ENCODE measurements at regions of chr1 and their contacts with region 1.

Region 1: GRCh38 chr1:209248649-209249279 is 334.8 kb upstream of the CAMK1G start:
- DNase-seq: peak; percentile 79
- H3K4me3 Mint-ChIP-seq: no peak overlapping the region
- H3K27ac Mint-ChIP-seq: no peak overlapping the region
- H3K4me1 Mint-ChIP-seq: no peaks in the 10 kb centered on the region
- H3K27me3 Mint-ChIP-seq: peaks cover 42% of the 10 kb centered on the region
- CTCF ChIP-seq: peak; percentile 95

Region 2: GRCh38 chr1:208834381-208835096 is 414.2 kb before region 1 on chr1:
- CTCF ChIA-PET with region 1: no interaction called
- intact Hi-C with region 1: loop called (anchors 5 kb)
- DNase-seq: no peak
- H3K4me3 Mint-ChIP-seq: no peak overlapping the region
- H3K27ac Mint-ChIP-seq: no peak overlapping the region
- H3K4me1 Mint-ChIP-seq: no peaks in the 10 kb centered on the region
- H3K27me3 Mint-ChIP-seq: no peaks in the 10 kb centered on the region
- CTCF ChIP-seq: no peak

Region 3: DNA sequence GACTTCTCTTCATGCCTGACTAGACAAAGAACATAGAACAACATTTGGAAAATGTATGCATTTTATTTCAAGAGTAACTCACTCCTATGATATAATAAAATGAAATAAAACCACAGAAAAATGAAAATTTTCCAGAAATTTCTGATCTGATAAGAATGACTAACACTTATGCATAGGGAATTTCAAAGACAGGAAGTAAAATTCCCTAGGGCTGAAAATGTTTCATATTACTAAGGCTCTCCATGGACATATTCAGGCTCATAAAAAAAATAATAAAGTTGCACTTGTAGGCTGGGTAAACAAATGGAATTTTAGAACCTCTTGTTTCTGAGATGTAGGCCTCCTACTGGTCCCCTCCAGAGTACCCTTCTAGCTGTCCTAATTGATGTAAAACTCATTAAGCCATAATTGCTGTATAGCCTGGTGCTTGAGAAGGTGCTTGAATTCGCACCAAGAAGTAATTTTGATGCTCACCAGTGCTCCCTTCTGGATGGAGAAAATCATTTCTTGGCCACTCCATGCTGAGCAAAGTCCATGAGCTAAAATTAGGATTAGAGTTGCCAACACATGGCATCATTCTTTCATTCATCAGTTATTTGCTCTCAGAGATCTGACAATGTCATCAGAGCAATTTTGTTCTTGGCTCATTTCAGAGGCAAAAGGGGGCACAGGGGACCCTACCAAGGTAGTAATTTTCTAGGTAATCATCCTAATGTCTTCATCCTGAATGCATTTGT is 306.2 kb before region 1 on chr1:
- CTCF ChIA-PET with region 1: no interaction called
- intact Hi-C with region 1: no loop called
- DNase-seq: no peak
- H3K4me3 Mint-ChIP-seq: no peak overlapping the region
- H3K27ac Mint-ChIP-seq: no peak overlapping the region
- H3K4me1 Mint-ChIP-seq: no peaks in the 10 kb centered on the region
- H3K27me3 Mint-ChIP-seq: no peaks in the 10 kb centered on the region
- CTCF ChIP-seq: no peak

Region 4: DNA sequence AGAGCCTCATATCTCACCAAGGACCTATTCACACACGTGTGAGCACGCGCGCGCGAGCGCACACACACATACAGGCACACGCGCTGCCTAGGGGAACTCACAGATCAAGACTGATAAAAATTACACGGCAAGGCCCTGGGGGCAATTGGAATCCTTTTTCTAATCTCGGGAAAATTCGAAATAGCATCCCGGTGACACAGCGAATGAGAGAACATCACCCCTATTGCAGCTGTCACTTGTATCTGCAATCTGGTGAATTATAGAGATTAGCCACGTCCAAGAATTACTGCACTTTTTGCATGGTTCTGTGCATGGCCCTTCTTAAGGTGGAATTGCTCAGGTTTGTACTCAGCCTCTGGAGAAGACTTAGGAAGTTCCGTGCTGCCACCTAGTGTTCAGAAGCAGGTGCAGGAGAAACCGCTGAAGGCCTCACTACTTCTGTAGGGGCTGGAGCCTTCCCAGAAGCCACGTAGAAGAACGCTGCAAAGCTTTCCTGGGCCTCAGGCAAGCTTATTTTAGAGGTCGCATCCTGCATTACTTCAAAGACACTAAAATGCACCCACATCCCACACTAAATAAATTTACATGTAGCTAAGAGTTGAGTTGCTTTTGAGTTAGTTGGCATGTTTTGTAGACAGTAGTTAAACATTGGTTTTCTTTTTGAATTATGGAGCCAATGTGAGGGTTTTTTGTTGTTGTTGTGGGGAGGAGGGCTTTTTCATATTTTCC is 105.5 kb after region 1 on chr1:
- CTCF ChIA-PET with region 1: interaction called, 3 read pairs
- intact Hi-C with region 1: loop called (anchors 1 kb)
- DNase-seq: peak; percentile 82
- H3K4me3 Mint-ChIP-seq: no peak overlapping the region
- H3K27ac Mint-ChIP-seq: no peak overlapping the region
- H3K4me1 Mint-ChIP-seq: peaks cover 7% of the 10 kb centered on the region
- H3K27me3 Mint-ChIP-seq: no peaks in the 10 kb centered on the region
- CTCF ChIP-seq: peak; percentile 84

Region 5: DNA sequence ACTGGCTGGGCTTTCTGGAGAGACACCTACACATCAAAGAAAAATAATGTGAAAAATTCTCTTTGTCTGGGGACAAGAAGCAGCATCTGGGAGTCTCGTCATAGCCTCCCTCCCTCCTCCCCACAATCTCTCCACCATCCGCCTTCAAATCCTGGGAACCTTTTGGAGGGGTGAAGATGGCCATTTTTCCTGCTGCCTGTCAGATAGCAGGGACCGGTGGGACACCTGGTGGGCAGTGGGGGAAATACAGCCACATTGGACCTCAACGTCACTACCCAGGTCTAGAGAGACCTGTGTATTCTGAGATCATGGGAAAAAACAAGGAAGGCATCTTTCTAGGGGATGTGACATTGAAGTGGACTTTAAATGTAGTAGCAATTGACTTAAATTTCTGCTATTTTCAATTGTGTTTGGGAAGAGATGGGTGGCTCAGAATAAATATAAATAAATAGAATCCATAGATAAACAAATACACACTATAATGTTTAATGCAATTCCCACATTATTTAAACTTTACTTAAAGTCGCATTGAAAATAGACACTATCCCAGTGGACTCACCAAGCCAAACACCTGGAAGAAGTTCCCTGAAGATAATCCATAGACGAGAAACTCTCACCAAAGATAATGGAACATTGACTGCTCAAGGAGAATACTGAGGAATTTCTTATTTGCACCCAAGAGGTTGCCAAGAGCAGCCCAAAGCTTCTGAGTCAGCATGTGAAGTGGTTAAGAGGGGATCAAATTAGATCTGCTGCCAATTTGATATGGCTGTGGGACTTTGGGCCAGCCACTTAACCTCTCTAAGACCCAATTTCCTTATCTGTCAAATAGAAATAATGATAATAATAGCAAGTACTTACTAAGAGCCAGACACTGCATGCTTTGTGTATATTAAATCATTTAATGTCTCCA is 187.1 kb after region 1 on chr1:
- CTCF ChIA-PET with region 1: no interaction called
- intact Hi-C with region 1: loop called (anchors 1 kb)
- DNase-seq: peak; percentile 94
- H3K4me3 Mint-ChIP-seq: no peak overlapping the region
- H3K27ac Mint-ChIP-seq: no peak overlapping the region
- H3K4me1 Mint-ChIP-seq: peaks cover 20% of the 10 kb centered on the region
- H3K27me3 Mint-ChIP-seq: peaks cover 17% of the 10 kb centered on the region
- CTCF ChIP-seq: peak; percentile 92